Adrenal gland (tissue), 19 donors: ENCODE measurements at regions of chr5 and their contacts with region 1.

Region 1: DNA sequence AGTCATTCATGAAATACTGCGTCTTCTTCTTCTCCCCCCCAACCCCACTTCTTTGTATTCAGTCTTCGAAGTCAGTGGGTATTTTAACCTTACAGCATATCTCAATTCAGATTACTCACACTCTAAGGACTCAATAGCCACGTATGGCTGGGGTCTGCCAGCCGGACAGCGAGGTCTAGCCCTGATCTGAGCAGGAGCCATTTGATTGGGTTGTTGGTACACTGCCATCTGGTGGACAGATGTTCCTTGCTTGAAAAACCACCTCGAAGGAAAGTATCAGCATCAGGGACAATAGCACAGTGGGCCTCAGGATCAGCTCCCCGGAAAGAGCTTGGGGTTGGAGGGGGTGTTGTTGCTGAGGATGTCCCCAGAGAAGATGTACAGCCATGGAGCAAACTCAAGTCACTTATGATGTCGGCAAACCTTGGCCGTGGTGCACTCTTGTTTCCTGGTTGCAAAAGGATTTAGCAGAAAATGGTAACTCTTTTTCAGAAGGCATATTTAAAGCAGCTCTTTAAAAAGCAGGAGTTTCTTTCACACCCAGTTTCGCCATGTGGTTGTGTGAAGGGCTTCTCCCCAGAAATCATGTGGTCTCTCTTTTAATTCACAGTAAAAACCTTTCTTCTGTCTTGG is 31.7 kb upstream of the KCNMB1 start:
- DNase-seq: peak; percentile 53 to 81 (median 62)
- H3K4me3 ChIP-seq: no peak overlapping the region
- H3K27ac ChIP-seq: no peak overlapping the region
- H3K4me1 ChIP-seq: no peaks in the 10 kb centered on the region
- H3K27me3 ChIP-seq: no peaks in the 10 kb centered on the region
- CTCF ChIP-seq: peak; percentile 55 to 80 (median 70)
- POLR2A ChIP-seq: no peak

Region 2: GRCh38 chr5:170100066-170100943 is 320.6 kb before region 1 on chr5:
- intact Hi-C with region 1: loop called (anchors 10 kb)
- DNase-seq: peak; percentile 74 to 95 (median 91)
- H3K4me3 ChIP-seq: no peak overlapping the region
- H3K27ac ChIP-seq: no peak overlapping the region
- H3K4me1 ChIP-seq: peaks cover 0 to 5% of the 10 kb centered on the region in 2 donors
- H3K27me3 ChIP-seq: no peaks in the 10 kb centered on the region
- CTCF ChIP-seq: peak; percentile 57 to 90 (median 75)
- POLR2A ChIP-seq: no peak

Region 3: GRCh38 chr5:170228762-170229435 is 192.0 kb before region 1 on chr5:
- intact Hi-C with region 1: loop called (anchors 2 to 5 kb)
- DNase-seq: no peak
- H3K4me3 ChIP-seq: no peak overlapping the region
- H3K27ac ChIP-seq: no peak overlapping the region
- H3K4me1 ChIP-seq: no peaks in the 10 kb centered on the region
- H3K27me3 ChIP-seq: no peaks in the 10 kb centered on the region
- CTCF ChIP-seq: no peak
- POLR2A ChIP-seq: no peak

Region 4: DNA sequence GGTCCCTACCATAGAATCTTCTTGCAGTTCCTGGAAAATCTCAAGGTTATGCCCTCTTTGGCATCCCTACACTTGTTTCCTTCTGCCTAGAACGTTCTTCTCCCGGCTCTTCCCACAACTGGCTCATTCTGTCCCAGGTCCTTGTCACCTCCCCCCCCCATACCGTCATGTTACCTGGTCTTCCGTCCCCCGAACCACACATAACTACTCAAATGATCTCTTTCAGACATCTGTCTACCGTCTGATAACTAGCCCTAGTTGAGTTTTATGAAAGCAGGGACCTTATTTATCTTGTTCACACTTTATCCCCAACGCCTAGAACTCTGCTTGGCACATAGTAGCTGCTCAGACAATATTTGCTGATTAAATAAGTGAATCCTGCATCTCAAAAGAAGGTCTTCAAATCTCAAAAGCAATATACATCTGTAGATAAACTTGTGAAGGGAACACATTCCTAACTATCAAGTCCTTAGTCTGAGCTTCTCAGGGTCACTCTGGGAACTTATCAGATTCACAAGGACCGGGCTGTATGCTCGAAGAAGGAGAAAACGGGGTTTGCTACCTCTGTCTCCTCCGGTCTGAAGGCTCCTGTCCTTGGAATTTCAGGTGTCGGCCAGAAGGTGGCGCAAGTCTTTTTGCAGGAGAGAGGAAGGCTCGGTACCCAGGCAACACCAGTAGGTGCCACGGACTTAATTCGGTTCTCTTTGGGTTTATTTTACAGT is 153.3 kb before region 1 on chr5:
- intact Hi-C with region 1: loop called (anchors 2 to 10 kb)
- DNase-seq: peak; percentile 70 to 86 (median 76)
- H3K4me3 ChIP-seq: no peak overlapping the region
- H3K27ac ChIP-seq: peak overlapping the region in 3 of 5 donors; percentile 13 to 74 (median 66)
- H3K4me1 ChIP-seq: peaks cover 8 to 31% of the 10 kb centered on the region in 2 donors
- H3K27me3 ChIP-seq: no peaks in the 10 kb centered on the region
- CTCF ChIP-seq: peak; percentile 79 to 88 (median 84)
- POLR2A ChIP-seq: no peak

Region 5: GRCh38 chr5:170791325-170791954 is 370.5 kb after region 1 on chr5:
- intact Hi-C with region 1: loop called in 1 of 2 experiments (anchors 10 kb)
- DNase-seq: peak; percentile 62 to 87 (median 76)
- H3K4me3 ChIP-seq: no peak overlapping the region
- H3K27ac ChIP-seq: no peak overlapping the region
- H3K4me1 ChIP-seq: no peaks in the 10 kb centered on the region
- H3K27me3 ChIP-seq: no peaks in the 10 kb centered on the region
- CTCF ChIP-seq: peak; percentile 30 to 71 (median 58)
- POLR2A ChIP-seq: no peak